Mucosa of descending colon (tissue), 3 donors: ENCODE measurements at regions of chr14 and their contacts with region 1.

Region 1: GRCh38 chr14:49959822-49960408 is 67.0 kb downstream of the ARF6 start:
- DNase-seq: peak in 2 of 3 donors; percentile 65 to 73
- ATAC-seq: peak; percentile 90
- H3K4me3 ChIP-seq: no peak overlapping the region
- H3K4me1 ChIP-seq: peaks cover 21% of the 10 kb centered on the region
- CTCF ChIP-seq: no peak

Region 2: GRCh38 chr14:49892636-49893308 is 67.1 kb before region 1 on chr14 and contains the start of gene ARF6:
- intact Hi-C with region 1: loop called in 1 of 2 experiments (anchors 10 kb)
- DNase-seq: peak; percentile 98 to 100 (median 99)
- ATAC-seq: peak; percentile 93
- H3K4me3 ChIP-seq: peak within 1 kb of the TSS; percentile 99
- H3K4me1 ChIP-seq: peaks cover 26% of the 10 kb centered on the region
- CTCF ChIP-seq: peak; percentile 16
- total RNA-seq, gene ARF6: 84.3 to 125 (median 123) TPM